Activated CD8-positive, alpha-beta memory T cell treated with anti-CD3 and anti-CD28 coated beads, Interleukin-2, amount 10 ng/mL, durations not matched to agents 7 days and 5 days (primary cell): ENCODE measurements at regions of chr16 and their contacts with region 1.

Region 1: GRCh38 chr16:78705694-78706093 is 606.2 kb downstream of the WWOX start:
- DNase-seq: no peak
- ATAC-seq: peak; percentile 68
- H3K4me3 Mint-ChIP-seq: no peak overlapping the region
- H3K27ac Mint-ChIP-seq: no peak overlapping the region
- H3K4me1 Mint-ChIP-seq: peaks cover 7% of the 10 kb centered on the region
- H3K27me3 Mint-ChIP-seq: no peaks in the 10 kb centered on the region

Region 2: DNA sequence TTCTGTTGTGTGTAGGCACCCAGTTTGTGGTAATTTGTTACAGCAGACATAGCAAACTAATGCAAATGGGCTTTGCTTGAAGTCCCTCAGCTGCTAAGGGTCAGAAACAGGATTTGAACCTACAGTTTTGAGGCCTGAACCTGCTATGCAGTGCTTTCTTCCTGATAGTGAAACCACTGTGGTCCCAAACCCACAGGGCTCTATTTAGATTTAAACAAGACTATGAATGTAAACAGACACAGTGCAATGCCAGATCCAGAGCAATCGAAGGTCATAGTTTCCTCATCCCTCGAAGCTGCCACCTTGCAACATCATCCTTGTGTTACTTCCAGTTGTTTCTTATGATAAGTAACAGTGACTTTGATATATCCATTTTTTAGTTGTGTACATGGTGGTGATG is 24.0 kb after region 1 on chr16:
- CTCF ChIA-PET with region 1: no interaction called
- DNase-seq: no peak
- ATAC-seq: no peak
- H3K4me3 Mint-ChIP-seq: no peak overlapping the region
- H3K27ac Mint-ChIP-seq: no peak overlapping the region
- H3K4me1 Mint-ChIP-seq: peaks cover 5% of the 10 kb centered on the region
- H3K27me3 Mint-ChIP-seq: no peaks in the 10 kb centered on the region

Region 3: DNA sequence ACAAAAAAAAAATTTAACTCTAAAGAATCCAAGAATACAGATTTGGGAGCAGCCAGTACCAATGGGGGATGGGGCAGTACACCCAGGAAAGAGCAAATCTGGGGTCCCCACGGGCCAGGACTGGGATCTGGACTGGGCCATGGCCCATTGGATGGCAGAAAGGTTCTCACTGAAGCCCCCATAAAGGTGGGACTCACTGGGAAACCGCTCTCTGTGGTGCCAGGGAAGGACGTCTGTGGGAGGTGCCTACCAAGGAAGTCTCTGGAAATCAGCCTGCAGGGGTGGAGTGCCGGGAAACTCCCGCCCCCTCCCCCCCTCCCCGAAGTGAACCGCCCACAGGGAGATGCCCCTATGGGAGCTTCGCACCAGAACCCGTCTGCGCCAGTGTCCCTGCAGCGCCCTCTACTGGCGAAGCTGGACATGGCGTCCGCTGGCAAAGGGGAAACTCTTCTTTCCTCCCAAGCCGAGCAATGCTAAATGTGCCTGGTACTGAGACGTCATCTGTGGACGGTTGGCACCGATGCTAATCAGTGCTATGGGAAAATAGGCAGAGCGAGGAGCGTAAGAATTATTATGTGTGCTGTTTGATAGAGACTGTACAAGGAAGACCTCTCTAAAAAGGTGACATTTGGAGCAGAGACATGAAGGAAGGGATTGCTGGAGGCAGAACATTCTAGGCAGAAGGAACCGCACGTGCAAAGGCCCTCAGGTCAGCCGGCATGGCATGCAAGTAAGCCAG is 64.8 kb after region 1 on chr16:
- CTCF ChIA-PET with region 1: interaction called, 33 read pairs
- DNase-seq: peak; percentile 86
- ATAC-seq: peak; percentile 56
- H3K4me3 Mint-ChIP-seq: no peak overlapping the region
- H3K27ac Mint-ChIP-seq: peak overlapping the region; percentile 23
- H3K4me1 Mint-ChIP-seq: peaks cover 52% of the 10 kb centered on the region
- H3K27me3 Mint-ChIP-seq: no peaks in the 10 kb centered on the region

Region 4: DNA sequence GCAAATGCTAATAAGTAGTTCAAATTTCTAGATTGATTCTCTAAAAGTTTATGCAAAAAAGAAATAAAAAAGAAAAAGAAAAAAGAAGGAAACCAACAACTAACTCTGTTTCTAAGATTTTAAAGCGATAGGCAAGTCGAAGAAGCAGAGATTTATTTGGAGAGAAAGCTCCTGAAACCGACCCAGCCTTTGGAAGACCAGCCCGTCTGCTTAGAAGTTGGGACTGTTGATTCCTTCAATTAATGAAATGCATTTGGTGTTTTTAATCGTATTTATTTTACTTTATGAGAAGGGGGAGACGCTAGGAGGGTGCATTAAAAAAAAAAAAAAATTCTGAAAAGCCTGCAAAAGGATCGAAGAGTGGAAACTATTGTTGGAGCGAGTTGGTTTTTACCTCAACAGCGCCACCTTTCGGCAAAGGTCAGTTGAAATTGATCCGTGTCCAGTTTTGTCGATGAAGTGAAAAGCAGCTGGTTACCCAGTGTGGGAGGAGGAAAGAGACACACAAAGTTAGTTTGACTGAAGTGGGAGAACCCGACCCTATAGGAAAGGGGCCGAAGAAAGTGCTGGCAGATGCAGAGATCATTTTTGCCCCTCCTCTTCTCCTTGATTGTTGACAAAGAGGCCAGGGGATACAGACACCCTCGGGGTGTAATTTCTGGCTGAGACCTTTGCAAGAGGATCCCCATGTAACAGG is 896.4 kb after region 1 on chr16:
- CTCF ChIA-PET with region 1: interaction called, 11 read pairs
- DNase-seq: peak; percentile 92
- ATAC-seq: peak; percentile 11
- H3K4me3 Mint-ChIP-seq: peak overlapping the region; percentile 88
- H3K27ac Mint-ChIP-seq: peak overlapping the region; percentile 97
- H3K4me1 Mint-ChIP-seq: peaks cover 33% of the 10 kb centered on the region
- H3K27me3 Mint-ChIP-seq: peaks cover 8% of the 10 kb centered on the region